Caco-2 (cell line): ENCODE measurements at regions of chr5 and their contacts with region 1.

Region 1: GRCh38 chr5:171907725-171908343 is 98.6 kb downstream of the FBXW11 start:
- DNase-seq: peak in 1 of 2 experiments; percentile 66
- H3K4me3 ChIP-seq: no peak overlapping the region
- H3K4me3 Mint-ChIP-seq: no peak overlapping the region
- H3K27ac Mint-ChIP-seq: no peak overlapping the region
- H3K4me1 ChIP-seq: no peaks in the 10 kb centered on the region
- H3K4me1 Mint-ChIP-seq: no peaks in the 10 kb centered on the region
- H3K27me3 ChIP-seq: no peaks in the 10 kb centered on the region
- H3K27me3 Mint-ChIP-seq: no peaks in the 10 kb centered on the region
- CTCF ChIP-seq: peak; percentile 78 to 79

Region 2: DNA sequence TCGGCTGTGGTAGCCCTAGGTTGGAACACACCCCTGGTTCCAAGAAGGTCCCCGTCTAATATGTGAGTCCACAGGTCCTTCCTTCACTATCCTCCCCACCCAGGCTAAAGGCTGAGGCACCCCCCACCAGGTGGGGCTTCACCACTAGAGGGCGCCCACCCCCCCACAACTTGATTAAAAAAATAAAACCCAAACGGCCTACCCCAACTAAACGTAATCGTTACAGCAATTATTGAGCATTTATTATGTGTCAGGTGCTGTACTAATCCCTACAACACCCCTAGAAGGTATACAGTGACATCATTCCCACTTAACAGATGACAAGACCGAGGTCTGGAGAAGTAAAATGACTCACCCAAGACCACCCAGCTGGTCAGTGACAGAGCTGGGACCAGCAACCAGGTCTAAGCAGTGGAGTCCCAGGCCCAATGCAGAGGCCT is 423.4 kb before region 1 on chr5:
- CTCF ChIA-PET with region 1: no interaction called
- POLR2A ChIA-PET with region 1: no interaction called
- intact Hi-C with region 1: loop called (anchors 10 kb)
- DNase-seq: peak in 1 of 2 experiments; percentile 47
- H3K4me3 ChIP-seq: no peak overlapping the region
- H3K4me3 Mint-ChIP-seq: no peak overlapping the region
- H3K27ac Mint-ChIP-seq: no peak overlapping the region
- H3K4me1 ChIP-seq: no peaks in the 10 kb centered on the region
- H3K4me1 Mint-ChIP-seq: no peaks in the 10 kb centered on the region
- H3K27me3 ChIP-seq: no peaks in the 10 kb centered on the region; the same call in 1 of the 2 replicates
- H3K27me3 Mint-ChIP-seq: peaks cover 13% of the 10 kb centered on the region
- CTCF ChIP-seq: peak; percentile 77 to 78

Region 3: GRCh38 chr5:171770153-171770552 is 137.7 kb before region 1 on chr5:
- CTCF ChIA-PET with region 1: no interaction called
- POLR2A ChIA-PET with region 1: no interaction called
- intact Hi-C with region 1: loop called (anchors 5 kb)
- DNase-seq: peak in 1 of 2 experiments; percentile 16
- H3K4me3 ChIP-seq: no peak overlapping the region
- H3K4me3 Mint-ChIP-seq: no peak overlapping the region
- H3K27ac Mint-ChIP-seq: no peak overlapping the region
- H3K4me1 ChIP-seq: no peaks in the 10 kb centered on the region
- H3K4me1 Mint-ChIP-seq: no peaks in the 10 kb centered on the region
- H3K27me3 ChIP-seq: no peaks in the 10 kb centered on the region
- H3K27me3 Mint-ChIP-seq: peaks cover 6% of the 10 kb centered on the region
- CTCF ChIP-seq: peak in 1 of 2 experiments; percentile 16

Region 4: DNA sequence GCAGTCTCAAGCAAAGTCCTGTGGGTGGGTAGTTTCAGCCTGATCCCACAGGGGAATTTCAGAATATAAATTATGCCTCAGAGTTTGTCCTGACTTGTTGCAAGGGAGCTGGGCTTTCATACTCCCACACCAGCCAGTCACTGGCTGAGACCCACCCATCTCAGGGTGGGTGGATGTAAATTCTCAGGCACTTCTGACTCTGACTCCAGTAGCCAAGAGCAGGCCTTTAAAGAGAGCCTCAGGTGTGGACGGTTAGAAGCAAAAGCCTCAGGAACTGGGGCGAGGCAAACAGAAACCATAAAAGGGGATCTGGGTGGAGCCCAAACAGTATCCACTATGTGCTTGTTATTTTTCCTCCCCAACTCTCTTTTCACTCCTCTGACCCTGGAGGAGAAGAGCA is 127.2 kb after region 1 on chr5:
- CTCF ChIA-PET with region 1: interaction called, 19 read pairs
- POLR2A ChIA-PET with region 1: no interaction called
- intact Hi-C with region 1: loop called (anchors 1 kb)
- DNase-seq: no peak
- H3K4me3 ChIP-seq: no peak overlapping the region
- H3K4me3 Mint-ChIP-seq: no peak overlapping the region
- H3K27ac Mint-ChIP-seq: no peak overlapping the region
- H3K4me1 ChIP-seq: no peaks in the 10 kb centered on the region
- H3K4me1 Mint-ChIP-seq: no peaks in the 10 kb centered on the region
- H3K27me3 ChIP-seq: no peaks in the 10 kb centered on the region
- H3K27me3 Mint-ChIP-seq: peaks cover under 1% of the 10 kb centered on the region
- CTCF ChIP-seq: no peak

Region 5: GRCh38 chr5:172293054-172293744 is 385.4 kb after region 1 on chr5:
- CTCF ChIA-PET with region 1: no interaction called
- POLR2A ChIA-PET with region 1: no interaction called
- intact Hi-C with region 1: loop called (anchors 1 kb)
- DNase-seq: peak; percentile 67 to 73
- H3K4me3 ChIP-seq: no peak overlapping the region
- H3K4me3 Mint-ChIP-seq: no peak overlapping the region
- H3K27ac Mint-ChIP-seq: no peak overlapping the region
- H3K4me1 ChIP-seq: no peaks in the 10 kb centered on the region
- H3K4me1 Mint-ChIP-seq: no peaks in the 10 kb centered on the region
- H3K27me3 ChIP-seq: no peaks in the 10 kb centered on the region
- H3K27me3 Mint-ChIP-seq: no peaks in the 10 kb centered on the region
- CTCF ChIP-seq: peak; percentile 87 to 88